Cardiac septum (tissue), 1 donor: ENCODE measurements at regions of chr11 and their contacts with region 1.

Region 1: GRCh38 chr11:44727373-44728287 is 868 bp downstream of the TSPAN18 start:
- DNase-seq: peak; percentile 93

Region 2: GRCh38 chr11:44565211-44565952 is 162.2 kb before region 1 on chr11 and contains the start of gene CD82:
- intact Hi-C with region 1: loop called (anchors 10 kb)
- DNase-seq: peak; percentile 100
- total RNA-seq, gene CD82: 27.9 TPM

Region 3: DNA sequence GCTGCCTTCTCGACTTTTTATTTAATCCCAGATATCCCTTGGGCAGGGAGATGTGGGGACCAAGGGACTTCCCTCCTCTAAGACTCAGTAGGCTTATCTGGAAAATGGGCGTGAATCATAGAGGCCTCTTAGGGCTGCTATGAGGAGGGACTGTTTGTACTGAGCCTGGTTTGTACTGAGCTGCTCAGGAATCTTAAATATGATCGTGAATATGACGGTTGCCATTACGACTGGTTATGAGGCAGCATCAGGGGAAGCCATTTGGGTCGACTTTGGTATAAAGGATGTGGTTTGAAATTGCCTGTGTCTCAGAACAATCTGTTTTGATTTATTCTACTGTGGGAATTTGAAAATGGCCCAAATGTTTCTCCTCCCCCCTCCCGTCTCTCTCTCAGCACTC is 19.7 kb after region 1 on chr11:
- intact Hi-C with region 1: loop called (anchors 2 kb)
- DNase-seq: no peak

Region 4: GRCh38 chr11:44775366-44775984 is 47.8 kb after region 1 on chr11:
- intact Hi-C with region 1: loop called (anchors 2 kb)
- DNase-seq: peak; percentile 80

Region 5: DNA sequence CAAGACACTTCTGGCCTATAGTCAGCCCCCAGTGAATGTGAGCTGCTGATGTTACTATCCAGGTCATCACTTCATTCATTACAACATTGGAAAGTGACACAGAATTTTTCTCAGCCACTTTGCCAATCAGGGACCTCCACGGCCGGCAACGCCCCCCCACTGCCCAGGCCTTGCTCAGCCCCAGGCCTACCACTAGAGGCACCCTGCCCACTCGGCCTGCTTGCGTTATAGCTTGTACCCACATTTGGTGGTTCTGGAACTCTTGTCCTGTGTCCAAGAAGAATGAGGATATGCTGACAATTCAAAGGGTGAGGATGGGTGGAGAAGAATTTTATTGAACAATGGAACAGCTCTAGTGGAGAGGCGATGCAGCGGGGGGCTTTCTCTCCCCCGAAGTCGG is 95.4 kb after region 1 on chr11:
- intact Hi-C with region 1: no loop called
- DNase-seq: no peak

Region 6: GRCh38 chr11:44911029-44911814 is 183.6 kb after region 1 on chr11:
- intact Hi-C with region 1: loop called (anchors 1 kb)
- DNase-seq: peak; percentile 84